ENCODE measurements at regions of chr10 and their contacts with region 1.

Region 1: DNA sequence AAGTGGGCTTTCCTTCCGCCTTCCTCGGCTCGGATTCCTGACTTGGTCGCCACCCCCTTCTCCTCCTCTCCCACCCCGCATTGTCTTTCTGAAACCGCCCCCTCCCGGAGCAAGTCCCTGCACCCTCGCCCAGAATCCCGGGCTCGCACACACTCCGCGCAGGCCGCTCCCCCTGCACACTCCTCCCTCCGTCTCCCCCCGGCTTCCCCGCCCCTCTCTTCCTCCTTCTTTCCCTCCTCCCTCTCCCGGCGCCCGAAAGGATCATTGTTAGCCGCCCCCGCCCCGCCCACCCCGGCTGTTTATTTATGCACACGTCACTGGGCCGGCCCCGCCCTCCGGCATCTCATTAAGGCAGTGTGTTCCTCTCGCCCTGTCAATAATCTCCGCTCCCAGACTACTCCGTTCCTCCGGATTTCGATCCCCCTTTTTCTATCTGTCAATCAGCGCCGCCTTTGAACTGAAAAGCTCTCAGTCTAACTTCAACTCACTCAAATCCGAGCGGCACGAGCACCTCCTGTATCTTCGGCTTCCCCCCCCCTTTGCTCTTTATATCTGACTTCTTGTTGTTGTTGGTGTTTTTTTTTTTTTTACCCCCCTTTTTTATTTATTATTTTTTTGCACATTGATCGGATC is at the start of gene TCF7L2:
- DNase-seq: peak; percentile 96
- H3K4me3 ChIP-seq: peak within 1 kb of the TSS; percentile 92
- H3K27ac ChIP-seq: peak within 1 kb of the TSS; percentile 92
- H3K4me1 ChIP-seq: peaks cover 56% of the 10 kb centered on the region
- H3K27me3 ChIP-seq: no peaks in the 10 kb centered on the region
- CTCF ChIP-seq: no peak
- total RNA-seq, gene TCF7L2: 8.9 TPM

Region 2: DNA sequence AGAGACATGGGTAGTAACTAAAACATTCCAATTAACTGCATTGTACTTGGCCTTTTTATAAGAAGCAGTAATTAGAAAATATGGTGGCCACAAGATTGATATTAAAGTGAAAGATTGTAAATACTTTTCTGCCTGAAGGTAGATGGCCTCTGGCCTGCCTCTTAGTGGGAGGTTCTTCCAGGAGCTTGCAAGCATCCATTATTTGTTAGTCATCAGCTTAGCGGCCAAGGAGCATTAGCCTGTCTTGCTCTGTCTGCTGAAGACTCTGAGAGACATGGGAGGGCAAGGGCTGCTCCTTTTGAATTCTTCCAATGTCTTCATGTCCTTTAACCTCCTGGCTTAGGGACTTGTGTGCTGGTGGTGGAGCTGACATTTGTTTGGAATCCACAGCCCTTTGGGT is 80.5 kb after region 1 on chr10:
- intact Hi-C with region 1: loop called (anchors 10 kb)
- DNase-seq: no peak
- H3K4me3 ChIP-seq: no peak overlapping the region
- H3K27ac ChIP-seq: no peak overlapping the region
- H3K4me1 ChIP-seq: peaks cover 57% of the 10 kb centered on the region
- H3K27me3 ChIP-seq: no peaks in the 10 kb centered on the region
- CTCF ChIP-seq: no peak

Region 3: DNA sequence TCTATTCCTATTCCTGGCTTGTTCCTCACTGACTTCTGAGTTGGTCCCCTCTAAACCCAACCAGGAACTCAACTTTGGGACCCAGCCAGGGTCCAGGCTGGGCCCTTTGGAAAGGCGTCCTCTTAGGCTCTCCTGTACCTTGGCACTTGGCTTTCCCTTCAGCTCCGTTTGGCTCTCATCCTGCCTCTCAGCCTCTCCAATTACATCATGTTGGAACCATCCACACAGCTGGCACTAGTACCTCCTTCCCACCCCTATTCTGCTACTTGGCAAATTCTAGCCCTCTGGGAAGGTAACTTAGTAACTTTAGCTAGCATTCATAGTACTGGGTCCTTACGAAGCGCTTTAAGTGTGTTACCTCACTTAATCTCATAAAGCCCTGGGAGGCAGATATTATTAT is 397.5 kb after region 1 on chr10:
- intact Hi-C with region 1: no loop called
- DNase-seq: peak; percentile 16
- H3K4me3 ChIP-seq: no peak overlapping the region
- H3K27ac ChIP-seq: no peak overlapping the region
- H3K4me1 ChIP-seq: no peaks in the 10 kb centered on the region
- H3K27me3 ChIP-seq: no peaks in the 10 kb centered on the region
- CTCF ChIP-seq: no peak

Measured in left ventricle myocardium inferior (tissue), 1 donor.